Activated CD4-positive, alpha-beta memory T cell treated with anti-CD3 and anti-CD28 coated beads for 36 hours (primary cell): ENCODE measurements at regions of chr22 and their contacts with region 1.

Region 1: DNA sequence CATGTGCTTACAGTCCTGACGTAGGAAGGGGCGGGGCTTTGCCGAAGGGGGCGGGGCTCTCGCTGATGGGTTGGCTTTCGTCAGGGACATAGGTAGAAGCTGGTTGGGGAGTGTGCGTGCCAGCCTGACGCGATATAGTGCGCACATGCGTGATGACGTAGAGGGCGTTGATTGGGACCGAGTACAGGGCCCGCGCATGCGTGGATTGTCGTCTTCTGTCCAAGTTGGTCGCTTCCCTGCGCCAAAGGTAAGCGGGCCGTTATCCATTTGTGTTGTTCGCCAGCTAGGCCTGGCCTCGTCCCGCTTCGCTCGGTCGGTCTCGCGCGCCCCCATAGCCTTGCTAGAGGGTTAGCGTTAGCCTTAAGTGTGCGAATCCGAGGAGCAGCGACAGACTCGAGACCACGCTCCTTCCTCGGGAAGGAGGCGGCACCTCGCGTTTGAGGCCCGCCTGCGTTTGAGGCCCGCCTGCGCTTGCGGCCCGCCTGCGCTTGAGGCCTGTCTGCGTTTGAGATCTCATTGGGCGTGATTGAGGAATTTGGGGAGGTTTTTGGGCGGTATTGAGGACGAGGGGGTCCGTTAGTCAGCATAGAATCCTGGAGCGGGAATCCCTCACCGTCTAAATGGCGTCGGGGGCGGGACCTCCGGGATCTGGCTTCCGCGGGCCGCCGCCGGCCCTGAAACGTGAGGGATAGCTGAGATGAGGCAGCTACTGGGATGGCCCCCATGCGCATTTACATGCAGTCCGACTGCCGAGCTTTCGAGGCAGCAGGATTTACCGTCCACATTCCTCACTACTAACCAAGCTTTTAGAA is at the start of gene XRCC6:
- DNase-seq: peak; percentile 100
- H3K4me3 Mint-ChIP-seq: peak within 1 kb of the TSS; percentile 97
- H3K27ac Mint-ChIP-seq: peak within 1 kb of the TSS; percentile 98
- H3K4me1 Mint-ChIP-seq: peaks cover 40% of the 10 kb centered on the region
- H3K27me3 Mint-ChIP-seq: no peaks in the 10 kb centered on the region
- total RNA-seq, gene XRCC6: 403 to 409 TPM

Region 2: DNA sequence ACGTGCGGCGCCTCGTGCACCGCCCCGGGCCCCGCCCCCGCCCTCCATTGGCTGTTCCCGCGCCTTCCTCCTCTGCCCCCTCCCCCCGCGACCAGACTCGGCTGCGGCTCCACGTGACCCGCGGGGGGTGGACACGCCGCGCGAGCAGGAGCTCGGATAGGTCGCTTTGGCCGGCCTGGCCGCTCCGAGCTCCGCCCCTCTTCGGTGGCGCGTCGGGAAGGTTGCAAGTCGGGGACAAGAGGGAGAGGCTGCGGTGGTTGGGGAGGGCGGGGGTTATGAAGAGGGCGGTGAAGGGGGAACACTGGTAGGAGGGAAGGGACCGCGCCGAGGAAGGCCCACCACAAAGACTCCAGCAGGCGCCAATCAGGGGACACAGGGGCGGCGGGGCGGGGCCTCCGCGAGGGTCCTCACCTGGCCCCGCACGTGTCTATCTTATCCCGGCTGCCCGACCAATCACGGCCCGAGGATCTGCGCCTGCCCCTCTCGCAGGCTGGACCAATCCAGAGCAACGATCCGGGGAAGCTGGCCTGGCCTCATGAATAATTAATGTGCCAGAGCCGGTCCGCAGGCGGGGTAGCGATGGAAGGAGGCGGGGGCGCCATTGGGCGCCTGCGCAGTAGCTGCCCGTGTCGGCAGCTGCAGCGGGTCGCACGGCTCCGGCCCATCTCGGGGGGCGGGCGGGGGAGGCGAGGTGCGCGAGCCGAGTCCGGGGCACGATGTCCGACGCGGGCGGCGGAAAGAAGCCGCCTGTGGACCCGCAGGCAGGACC is 239.8 kb before region 1 on chr22 and contains the start of gene TEF:
- CTCF ChIA-PET with region 1: no interaction called
- POLR2A ChIA-PET with region 1: interaction called, 8 read pairs
- intact Hi-C with region 1: loop called (anchors 1 kb)
- DNase-seq: peak; percentile 98
- H3K4me3 Mint-ChIP-seq: peak within 1 kb of the TSS; percentile 81
- H3K27ac Mint-ChIP-seq: peak within 1 kb of the TSS; percentile 86
- H3K4me1 Mint-ChIP-seq: peaks cover 15% of the 10 kb centered on the region
- H3K27me3 Mint-ChIP-seq: no peaks in the 10 kb centered on the region
- total RNA-seq, gene TEF: 1.4 to 1.6 TPM

Region 3: DNA sequence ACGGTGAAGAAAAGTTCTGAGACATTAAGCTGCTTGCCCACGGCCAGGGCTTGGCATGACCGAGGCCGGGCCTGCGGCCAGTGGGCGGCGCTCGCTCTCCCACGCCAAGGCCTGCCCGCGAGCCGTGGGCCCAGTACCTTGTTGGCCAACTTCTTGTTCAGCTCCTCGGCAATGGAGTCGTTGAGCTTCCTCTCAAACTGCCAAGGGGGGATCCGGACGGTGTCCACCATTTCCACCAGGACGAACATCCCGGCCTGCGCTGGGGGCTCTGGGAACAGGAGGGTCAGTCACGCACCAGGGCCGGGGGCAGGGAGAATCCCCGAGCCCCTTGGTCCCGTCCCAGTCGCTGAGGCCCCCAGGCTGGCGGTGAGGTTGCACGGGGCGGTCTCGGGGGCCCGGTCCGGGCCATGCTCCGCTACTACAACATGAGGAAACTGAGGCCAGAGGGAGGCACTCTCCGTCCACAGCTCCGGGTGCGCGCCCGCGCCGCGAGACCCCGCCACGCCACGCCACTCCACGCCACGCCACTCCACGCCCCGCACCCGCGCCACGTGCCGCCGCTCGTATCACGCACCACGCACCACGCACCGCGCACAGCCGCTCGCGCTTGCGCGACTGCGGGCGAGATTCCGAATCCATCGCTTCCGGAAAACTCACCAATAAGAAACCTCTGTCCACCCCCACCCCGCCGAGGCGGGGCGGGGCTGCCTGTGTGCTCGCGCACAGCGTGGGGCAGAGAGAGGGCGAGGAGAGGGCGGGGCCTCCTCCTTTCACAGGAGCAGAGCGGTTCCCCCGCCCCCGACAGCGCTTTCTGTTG is 77.2 kb before region 1 on chr22 and contains the start of gene POLR3H:
- CTCF ChIA-PET with region 1: no interaction called
- POLR2A ChIA-PET with region 1: interaction called, 7 read pairs
- intact Hi-C with region 1: loop called (anchors 1 kb)
- DNase-seq: peak; percentile 98
- H3K4me3 Mint-ChIP-seq: peak within 1 kb of the TSS; percentile 97
- H3K27ac Mint-ChIP-seq: peak within 1 kb of the TSS; percentile 89
- H3K4me1 Mint-ChIP-seq: peaks cover 45% of the 10 kb centered on the region
- H3K27me3 Mint-ChIP-seq: no peaks in the 10 kb centered on the region
- total RNA-seq, gene POLR3H: 23.3 to 23.8 TPM

Region 4: GRCh38 chr22:41576877-41577276 is 44.4 kb before region 1 on chr22:
- CTCF ChIA-PET with region 1: no interaction called
- POLR2A ChIA-PET with region 1: no interaction called
- intact Hi-C with region 1: no loop called
- DNase-seq: peak; percentile 53
- H3K4me3 Mint-ChIP-seq: no peak overlapping the region
- H3K27ac Mint-ChIP-seq: no peak overlapping the region
- H3K4me1 Mint-ChIP-seq: no peaks in the 10 kb centered on the region
- H3K27me3 Mint-ChIP-seq: no peaks in the 10 kb centered on the region

Region 5: DNA sequence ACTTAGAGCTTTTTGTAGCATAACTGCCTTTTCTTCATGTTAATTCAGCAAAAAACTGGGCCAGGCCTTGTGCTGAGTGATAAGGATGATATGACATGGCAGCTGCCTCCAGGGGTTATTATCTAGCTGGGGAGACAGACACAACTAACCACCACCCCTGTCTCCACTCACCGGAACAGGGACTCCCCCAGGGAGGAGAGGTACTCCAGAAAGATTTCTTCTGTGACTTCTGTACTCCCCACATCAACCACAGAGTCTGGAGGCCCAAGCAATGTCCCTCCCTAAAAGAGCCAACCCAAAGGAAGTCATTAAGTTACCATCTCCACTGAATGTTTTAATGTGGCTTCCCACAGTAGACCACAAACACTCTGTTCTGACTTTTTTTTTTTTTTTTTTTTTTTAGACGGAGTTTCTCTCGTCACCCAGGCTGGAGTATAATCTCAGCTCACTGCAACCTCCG is 17.4 kb before region 1 on chr22:
- CTCF ChIA-PET with region 1: interaction called, 4 read pairs
- POLR2A ChIA-PET with region 1: interaction called, 33 read pairs
- intact Hi-C with region 1: loop called (anchors 1 kb)
- DNase-seq: peak; percentile 86
- H3K4me3 Mint-ChIP-seq: no peak overlapping the region
- H3K27ac Mint-ChIP-seq: peak overlapping the region; percentile 18
- H3K4me1 Mint-ChIP-seq: peaks cover 31% of the 10 kb centered on the region
- H3K27me3 Mint-ChIP-seq: no peaks in the 10 kb centered on the region

Region 6: DNA sequence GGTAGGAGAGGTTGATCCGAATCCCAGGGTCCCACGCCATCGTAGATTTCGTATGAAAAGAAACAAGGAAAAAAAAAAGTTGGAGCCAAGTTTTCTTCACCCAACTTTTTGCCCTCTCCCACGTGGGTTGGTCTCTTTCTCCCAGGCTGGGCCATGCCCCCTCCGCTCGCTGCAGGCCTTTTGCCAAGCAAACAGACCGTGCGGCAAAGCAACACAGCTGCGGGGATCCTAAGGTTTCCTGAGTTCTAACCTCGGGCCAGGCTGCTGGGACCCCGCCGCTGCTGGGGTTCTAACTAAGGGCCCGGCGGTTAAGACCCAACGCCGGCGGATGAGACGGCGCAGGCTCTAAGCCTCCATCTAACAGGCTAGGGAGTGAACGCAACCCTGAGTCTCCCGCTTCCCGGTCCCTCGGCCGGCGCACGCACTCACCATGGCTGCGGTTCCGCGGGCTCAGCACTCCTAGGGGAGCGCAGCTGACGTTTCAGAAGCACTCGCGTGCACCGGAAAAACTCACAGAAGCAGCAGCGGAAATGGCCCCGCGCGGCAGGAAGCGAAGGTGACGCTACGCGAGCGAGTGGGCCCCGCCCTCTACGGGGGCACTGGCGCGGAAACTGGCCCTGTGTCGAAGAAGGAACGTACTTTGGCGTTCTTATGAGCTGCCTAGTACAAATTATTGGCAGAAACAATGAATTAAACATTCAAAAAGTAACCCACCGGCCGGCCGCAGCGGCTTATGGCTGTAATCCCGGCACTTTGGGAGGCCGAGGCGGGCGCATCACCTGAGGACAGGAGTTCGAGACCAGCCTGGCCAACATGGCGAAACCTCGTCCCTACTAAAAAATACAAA is 67.3 kb after region 1 on chr22 and contains the start of gene SNU13:
- CTCF ChIA-PET with region 1: no interaction called
- POLR2A ChIA-PET with region 1: interaction called, 10 read pairs
- intact Hi-C with region 1: loop called (anchors 2 kb)
- DNase-seq: peak; percentile 96
- H3K4me3 Mint-ChIP-seq: peak within 1 kb of the TSS; percentile 99
- H3K27ac Mint-ChIP-seq: peak within 1 kb of the TSS; percentile 97
- H3K4me1 Mint-ChIP-seq: peaks cover 34% of the 10 kb centered on the region
- H3K27me3 Mint-ChIP-seq: no peaks in the 10 kb centered on the region
- total RNA-seq, gene SNU13: 236 to 242 TPM